ENCODE measurements at regions of chr9 and their contacts with region 1.

Region 1: GRCh38 chr9:38368726-38369125 is 23.8 kb upstream of the ALDH1B1 start:
- DNase-seq: no peak
- H3K4me3 ChIP-seq: no peak overlapping the region
- H3K27ac ChIP-seq: no peak overlapping the region
- H3K4me1 ChIP-seq: no peaks in the 10 kb centered on the region
- H3K27me3 ChIP-seq: peaks cover 28% of the 10 kb centered on the region
- CTCF ChIP-seq: no peak

Region 2: GRCh38 chr9:37913480-37914153 is 455.1 kb before region 1 on chr9:
- intact Hi-C with region 1: loop called (anchors 5 kb)
- DNase-seq: peak; percentile 67
- H3K4me3 ChIP-seq: no peak overlapping the region
- H3K27ac ChIP-seq: no peak overlapping the region
- H3K4me1 ChIP-seq: peaks cover 48% of the 10 kb centered on the region
- H3K27me3 ChIP-seq: no peaks in the 10 kb centered on the region
- CTCF ChIP-seq: peak; percentile 98

Region 3: DNA sequence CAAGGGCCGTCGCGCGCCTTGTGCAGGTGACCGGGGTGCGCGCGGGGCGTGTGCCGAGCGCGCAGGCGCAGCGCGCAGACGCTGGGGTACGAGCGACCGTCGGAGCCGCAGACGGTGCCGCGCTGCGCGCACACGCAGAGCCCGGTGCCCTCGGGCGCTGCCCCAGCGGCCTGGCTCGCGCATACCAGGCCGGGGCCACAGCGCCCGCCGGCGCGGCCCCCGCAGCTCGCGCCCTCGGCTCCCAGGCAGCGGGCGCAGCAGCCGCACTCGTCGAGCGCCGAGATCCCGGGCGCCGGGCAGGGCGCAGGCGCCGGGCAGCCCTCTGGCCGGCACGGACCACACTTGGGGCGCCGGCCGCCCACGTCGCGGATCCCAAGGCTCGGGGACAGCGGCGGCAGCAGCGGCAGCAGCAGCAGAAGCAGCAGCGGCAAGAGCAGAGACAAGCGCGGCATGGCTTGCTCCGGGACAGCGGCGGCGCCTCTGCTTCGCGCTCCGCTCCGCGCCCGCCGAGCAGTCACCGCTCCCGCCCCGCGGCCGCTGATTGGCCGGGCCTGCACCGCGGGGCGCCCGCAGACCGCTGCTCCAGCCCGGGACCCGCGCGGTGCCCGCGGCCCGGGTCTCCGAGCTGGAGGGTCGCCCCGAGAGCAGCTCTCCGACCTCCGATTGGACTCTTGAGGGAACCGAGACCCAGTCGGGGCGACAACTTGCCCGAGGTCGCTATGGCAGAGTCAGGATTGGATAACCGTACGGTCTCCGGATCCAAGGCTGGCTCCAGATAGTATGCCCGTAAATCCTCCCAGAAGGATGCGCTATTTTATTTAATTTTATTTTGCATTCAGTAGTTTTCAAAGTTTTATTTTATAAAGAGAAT is 55.5 kb after region 1 on chr9 and contains the start of gene IGFBPL1:
- intact Hi-C with region 1: no loop called
- DNase-seq: no peak
- H3K4me3 ChIP-seq: peak within 1 kb of the TSS; percentile 56
- H3K27ac ChIP-seq: no peak within 1 kb of the TSS
- H3K4me1 ChIP-seq: peaks cover 4% of the 10 kb centered on the region
- H3K27me3 ChIP-seq: peaks cover 95% of the 10 kb centered on the region
- CTCF ChIP-seq: no peak
- total RNA-seq, gene IGFBPL1: not detected

Measured in left ventricle myocardium inferior (tissue), 1 donor.